ENCODE measurements at regions of chr1 and their contacts with region 1.

Region 1: GRCh38 chr1:171313835-171314320 is at the start of gene FMO4:
- DNase-seq: peak; percentile 5 to 84 (median 66)
- H3K4me3 ChIP-seq: peak within 1 kb of the TSS in 58 of 59 donors; percentile 1 to 66 (median 43)
- H3K27ac ChIP-seq: peak within 1 kb of the TSS in 49 of 59 donors; percentile 5 to 81 (median 49)
- H3K27me3 ChIP-seq: no peaks in the 10 kb centered on the region
- CTCF ChIP-seq: peak; percentile 74 to 98 (median 88)
- total RNA-seq, gene FMO4: 0.35 to 5.3 (median 2.0) TPM

Region 2: GRCh38 chr1:170967042-170967910 is 346.6 kb before region 1 on chr1:
- intact Hi-C with region 1: loop called (anchors 5 to 10 kb)
- DNase-seq: no peak
- H3K4me3 ChIP-seq: peak overlapping the region in 1 of 59 donors; percentile 28
- H3K27ac ChIP-seq: no peak overlapping the region
- H3K27me3 ChIP-seq: no peaks in the 10 kb centered on the region
- CTCF ChIP-seq: peak; percentile 42 to 82 (median 70)

Region 3: DNA sequence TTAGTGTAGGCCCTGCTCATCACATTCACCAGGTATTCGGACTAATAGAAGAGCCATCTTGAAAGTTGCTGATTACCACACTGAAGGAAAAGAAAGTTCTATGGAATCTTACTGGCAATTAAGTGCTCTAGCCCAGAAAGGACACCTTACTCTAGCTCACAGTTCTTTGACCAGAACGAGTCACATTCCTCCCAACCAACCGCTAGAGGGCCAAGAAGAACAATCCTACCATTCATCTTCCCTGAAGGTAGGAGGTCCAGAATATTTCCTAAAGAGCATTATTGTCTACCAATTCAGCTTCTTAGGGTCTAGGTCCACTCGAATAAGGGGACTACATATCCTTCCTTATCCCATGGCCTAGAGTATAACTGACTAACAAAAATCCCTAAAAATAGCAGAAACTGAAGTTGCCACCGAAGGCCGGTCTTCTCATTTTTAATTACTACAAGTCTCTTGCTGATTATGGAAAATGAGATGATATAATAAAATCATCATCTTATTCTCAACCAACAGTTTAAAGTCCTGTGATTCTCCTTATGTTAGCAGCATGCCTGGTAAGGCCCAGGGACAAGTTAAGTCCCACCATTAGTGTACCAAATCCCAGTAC is 68.3 kb before region 1 on chr1:
- intact Hi-C with region 1: loop called (anchors 2 to 10 kb)
- DNase-seq: no peak
- H3K4me3 ChIP-seq: no peak overlapping the region
- H3K27ac ChIP-seq: no peak overlapping the region
- H3K27me3 ChIP-seq: no peaks in the 10 kb centered on the region
- CTCF ChIP-seq: peak in 55 of 56 donors; percentile 14 to 74 (median 60)

Region 4: GRCh38 chr1:171334024-171334640 is 20.3 kb after region 1 on chr1:
- intact Hi-C with region 1: no loop called
- DNase-seq: no peak
- H3K4me3 ChIP-seq: no peak overlapping the region
- H3K27ac ChIP-seq: no peak overlapping the region
- H3K27me3 ChIP-seq: no peaks in the 10 kb centered on the region
- CTCF ChIP-seq: no peak

Region 5: DNA sequence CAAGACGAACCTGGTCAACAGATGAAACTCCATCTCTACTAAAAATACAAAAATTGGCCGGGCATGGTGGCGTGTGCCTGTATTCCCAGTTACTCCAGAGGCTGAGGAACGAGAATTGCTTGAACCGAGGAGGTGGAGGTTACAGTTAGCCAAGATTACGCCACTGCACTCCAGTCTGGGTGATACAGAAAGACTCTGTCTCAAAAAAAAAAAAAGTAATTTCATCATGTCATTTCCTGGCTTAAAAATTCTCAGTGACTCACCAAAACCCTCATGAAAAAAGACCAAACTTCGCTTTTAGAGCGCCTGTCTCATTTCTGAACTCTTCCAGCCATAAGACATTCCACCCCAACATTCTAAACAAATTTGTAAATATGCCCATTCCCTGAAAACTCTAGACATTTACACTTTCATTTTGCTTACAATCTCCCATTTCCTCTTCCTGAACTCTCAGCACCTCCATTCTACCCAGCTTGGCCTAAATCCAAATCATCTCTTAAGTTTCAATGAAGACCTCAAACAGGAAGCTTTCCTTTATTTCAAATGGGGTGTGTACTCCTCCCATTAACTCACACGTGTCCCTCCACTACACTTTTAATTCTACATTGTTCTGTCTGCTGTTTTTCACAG is 121.0 kb after region 1 on chr1:
- intact Hi-C with region 1: no loop called
- DNase-seq: no peak
- H3K4me3 ChIP-seq: no peak overlapping the region
- H3K27ac ChIP-seq: no peak overlapping the region
- H3K27me3 ChIP-seq: no peaks in the 10 kb centered on the region
- CTCF ChIP-seq: no peak

Measured in dorsolateral prefrontal cortex (tissue), 120 donors.